T-cell (primary cell): ENCODE measurements at regions of chr7 and their contacts with region 1.

Region 1: GRCh38 chr7:92598310-92598981 is 8.3 kb upstream of the FAM133B start:
- DNase-seq: no peak
- ATAC-seq: no peak
- H3K4me3 ChIP-seq: no peak overlapping the region
- H3K4me3 Mint-ChIP-seq: no peak overlapping the region
- H3K27ac ChIP-seq: no peak overlapping the region
- H3K27ac Mint-ChIP-seq: no peak overlapping the region
- H3K4me1 ChIP-seq: no peaks in the 10 kb centered on the region
- H3K4me1 Mint-ChIP-seq: no peaks in the 10 kb centered on the region
- H3K27me3 ChIP-seq: no peaks in the 10 kb centered on the region
- H3K27me3 Mint-ChIP-seq: peaks cover 0 to 1% of the 10 kb centered on the region in 2 donors

Region 2: DNA sequence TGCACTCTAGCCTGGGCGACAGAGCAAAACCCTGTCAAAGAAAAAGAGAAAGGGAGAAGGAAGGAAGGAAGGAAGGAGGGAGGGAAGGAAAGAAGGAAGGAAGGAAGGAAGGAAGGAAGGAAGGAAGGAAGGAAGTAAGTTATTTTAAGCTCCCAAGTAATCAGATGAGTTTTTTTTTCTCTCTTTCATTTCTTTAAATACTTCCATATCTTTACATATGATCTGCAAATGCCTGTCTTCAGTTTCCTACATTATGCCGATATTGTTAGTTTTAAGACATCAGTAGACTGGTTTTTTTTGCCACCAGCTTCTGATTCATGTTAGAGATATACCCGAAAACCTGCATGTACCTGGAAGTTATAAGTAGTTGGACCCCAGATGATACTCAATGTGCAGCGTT is 1506.8 kb before region 1 on chr7:
- CTCF ChIA-PET with region 1: no interaction called
- POLR2A ChIA-PET with region 1: interaction called in 1 of 2 experiments, 10 read pairs
- DNase-seq: no peak
- ATAC-seq: no peak
- H3K4me3 ChIP-seq: no peak overlapping the region
- H3K4me3 Mint-ChIP-seq: no peak overlapping the region
- H3K27ac ChIP-seq: no peak overlapping the region
- H3K27ac Mint-ChIP-seq: no peak overlapping the region
- H3K4me1 ChIP-seq: peaks cover 2 to 4% of the 10 kb centered on the region in 2 experiments
- H3K4me1 Mint-ChIP-seq: peaks cover 0 to 3% (median under 1%) of the 10 kb centered on the region in 3 donors
- H3K27me3 ChIP-seq: no peaks in the 10 kb centered on the region
- H3K27me3 Mint-ChIP-seq: peaks cover 0 to 3% of the 10 kb centered on the region in 2 donors

Region 3: DNA sequence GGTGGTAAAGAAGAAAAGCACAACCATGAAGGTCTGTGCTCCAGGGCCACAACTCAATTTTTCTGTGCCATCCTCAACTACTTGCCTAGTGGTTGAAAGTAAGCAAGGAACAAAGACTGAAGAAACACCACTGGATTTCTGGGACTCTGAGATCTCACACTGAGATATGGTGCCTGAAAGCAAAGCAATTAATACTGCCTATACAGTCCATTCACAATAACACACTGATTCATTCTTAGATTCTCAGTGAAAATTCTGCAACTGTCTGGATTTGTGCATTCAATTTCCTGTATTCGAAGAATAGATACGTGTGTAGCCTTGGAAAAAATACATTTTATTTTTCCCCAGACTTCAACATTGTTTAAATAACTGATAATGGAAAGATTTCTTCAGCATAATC is 108.1 kb after region 1 on chr7:
- CTCF ChIA-PET with region 1: no interaction called
- POLR2A ChIA-PET with region 1: no interaction called
- DNase-seq: no peak
- ATAC-seq: no peak
- H3K4me3 ChIP-seq: no peak overlapping the region
- H3K4me3 Mint-ChIP-seq: no peak overlapping the region
- H3K27ac ChIP-seq: no peak overlapping the region
- H3K27ac Mint-ChIP-seq: no peak overlapping the region
- H3K4me1 ChIP-seq: no peaks in the 10 kb centered on the region
- H3K4me1 Mint-ChIP-seq: peaks cover 3 to 25% (median 18%) of the 10 kb centered on the region in 3 donors
- H3K27me3 ChIP-seq: no peaks in the 10 kb centered on the region
- H3K27me3 Mint-ChIP-seq: no peaks in the 10 kb centered on the region